Psoas muscle (tissue), 8 donors: ENCODE measurements at regions of chr9 and their contacts with region 1.

Region 1: GRCh38 chr9:97803167-97804058 is 49.6 kb upstream of the FOXE1 start:
- DNase-seq: peak; percentile 60 to 84
- ATAC-seq: peak; percentile 84 to 95 (median 90)
- H3K4me3 ChIP-seq: peak overlapping the region; percentile 62
- H3K27ac ChIP-seq: no peak overlapping the region
- H3K4me1 ChIP-seq: no peaks in the 10 kb centered on the region
- H3K27me3 ChIP-seq: peaks cover 0 to 69% (median 3%) of the 10 kb centered on the region in 3 donors
- CTCF ChIP-seq: no peak

Region 2: GRCh38 chr9:97744710-97745701 is 58.4 kb before region 1 on chr9:
- intact Hi-C with region 1: no loop called
- DNase-seq: no peak
- ATAC-seq: no peak
- H3K4me3 ChIP-seq: no peak overlapping the region
- H3K27ac ChIP-seq: no peak overlapping the region
- H3K4me1 ChIP-seq: peaks cover 8% of the 10 kb centered on the region
- H3K27me3 ChIP-seq: peaks cover 0 to 17% (median 0%) of the 10 kb centered on the region in 3 donors
- CTCF ChIP-seq: no peak

Region 3: GRCh38 chr9:97853844-97854695 is 50.7 kb after region 1 on chr9:
- intact Hi-C with region 1: no loop called
- DNase-seq: no peak
- ATAC-seq: peak in 1 of 4 donors; percentile 42
- H3K4me3 ChIP-seq: peak overlapping the region; percentile 59
- H3K27ac ChIP-seq: no peak overlapping the region
- H3K4me1 ChIP-seq: peaks cover 17% of the 10 kb centered on the region
- H3K27me3 ChIP-seq: peaks cover 6 to 99% (median 57%) of the 10 kb centered on the region in 3 donors
- CTCF ChIP-seq: peak; percentile 12

Region 4: GRCh38 chr9:97866848-97867247 is 63.4 kb after region 1 on chr9:
- intact Hi-C with region 1: loop called in 1 of 2 experiments (anchors 10 kb)
- DNase-seq: no peak
- ATAC-seq: no peak
- H3K4me3 ChIP-seq: no peak overlapping the region
- H3K27ac ChIP-seq: no peak overlapping the region
- H3K4me1 ChIP-seq: no peaks in the 10 kb centered on the region
- H3K27me3 ChIP-seq: peaks cover 0 to 31% (median 1%) of the 10 kb centered on the region in 3 donors
- CTCF ChIP-seq: no peak